CD4-positive, alpha-beta memory T cell (primary cell): ENCODE measurements at regions of chr3 and their contacts with region 1.

Region 1: DNA sequence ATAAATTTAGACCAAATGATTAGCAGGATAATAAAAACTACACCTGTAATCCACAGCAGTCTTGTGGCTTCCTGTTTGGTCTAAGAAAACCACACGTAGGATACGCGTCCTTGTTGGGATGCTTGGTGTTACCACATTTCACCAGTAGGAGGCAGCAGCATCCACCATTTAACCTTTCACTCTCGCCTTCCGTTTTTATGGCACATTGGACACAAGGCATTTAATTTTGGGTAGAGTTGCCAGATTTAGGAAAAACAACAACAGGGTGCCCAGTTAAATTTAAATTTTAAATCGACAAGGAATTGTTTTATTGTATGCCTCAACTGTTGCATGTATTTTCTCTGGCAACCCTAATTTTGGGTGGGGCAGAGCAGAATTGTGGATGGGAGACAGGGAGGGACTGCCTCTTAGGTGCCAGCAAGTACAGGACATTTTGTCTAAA is 6.3 kb downstream of the LRRC31 start:
- DNase-seq: peak; percentile 54 to 71 (median 66)
- H3K4me3 ChIP-seq: no peak overlapping the region
- H3K4me3 Mint-ChIP-seq: no peak overlapping the region
- H3K27ac ChIP-seq: no peak overlapping the region
- H3K27ac Mint-ChIP-seq: peak overlapping the region in 2 of 7 donors; percentile 23 to 38
- H3K4me1 ChIP-seq: peaks cover 7% of the 10 kb centered on the region
- H3K4me1 Mint-ChIP-seq: peaks cover 4 to 15% (median 4%) of the 10 kb centered on the region in 4 donors
- H3K27me3 ChIP-seq: no peaks in the 10 kb centered on the region
- H3K27me3 Mint-ChIP-seq: peaks cover 3 to 9% of the 10 kb centered on the region in 2 donors

Region 2: DNA sequence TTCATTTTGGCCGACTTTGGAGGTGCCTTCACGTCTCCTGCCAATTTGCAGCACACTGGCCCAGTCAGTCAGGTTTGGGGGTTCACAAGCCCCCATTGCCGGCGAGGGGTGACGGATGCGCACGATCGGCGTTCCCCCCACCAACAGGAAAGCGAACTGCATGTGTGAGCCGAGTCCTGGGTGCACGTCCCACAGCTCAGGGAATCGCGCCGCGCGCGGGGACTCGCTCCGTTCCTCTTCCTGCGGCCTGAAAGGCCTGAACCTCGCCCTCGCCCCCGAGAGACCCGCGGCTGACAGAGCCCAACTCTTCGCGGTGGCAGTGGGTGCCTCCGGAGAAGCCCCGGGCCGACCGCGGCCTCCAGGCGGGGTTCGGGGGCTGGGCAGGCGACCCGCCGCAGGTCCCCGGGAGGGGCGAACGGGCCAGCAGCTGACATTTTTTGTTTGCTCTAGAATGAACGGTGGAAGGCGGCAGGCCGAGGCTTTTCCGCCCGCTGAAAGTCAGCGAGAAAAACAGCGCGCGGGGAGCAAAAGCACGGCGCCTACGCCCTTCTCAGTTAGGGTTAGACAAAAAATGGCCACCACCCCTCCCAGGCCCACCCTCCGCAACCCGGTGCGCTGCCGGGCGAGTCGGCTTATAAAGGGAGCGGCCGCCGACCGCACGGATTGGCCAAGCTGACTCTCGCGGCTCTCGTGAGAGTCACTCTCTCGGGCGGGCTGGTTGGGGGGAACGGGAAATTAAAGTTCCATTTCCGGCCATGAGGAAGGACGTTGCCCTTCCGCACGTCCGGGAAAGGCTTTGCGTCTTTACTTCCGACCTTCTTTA is 98.8 kb before region 1 on chr3 and contains the start of gene TERC:
- CTCF ChIA-PET with region 1: interaction called, 29 read pairs
- POLR2A ChIA-PET with region 1: no interaction called
- intact Hi-C with region 1: loop called (anchors 1 kb)
- DNase-seq: peak; percentile 93 to 96 (median 95)
- H3K4me3 ChIP-seq: peak within 1 kb of the TSS; percentile 36 to 70
- H3K4me3 Mint-ChIP-seq: peak within 1 kb of the TSS; percentile 94 to 98 (median 98)
- H3K27ac ChIP-seq: peak within 1 kb of the TSS; percentile 87
- H3K27ac Mint-ChIP-seq: peak within 1 kb of the TSS; percentile 95 to 99 (median 98)
- H3K4me1 ChIP-seq: peaks cover 23% of the 10 kb centered on the region
- H3K4me1 Mint-ChIP-seq: peaks cover 15 to 43% (median 23%) of the 10 kb centered on the region in 4 donors
- H3K27me3 ChIP-seq: no peaks in the 10 kb centered on the region
- H3K27me3 Mint-ChIP-seq: no peaks in the 10 kb centered on the region
- total RNA-seq, gene TERC: 15.6 to 15.7 TPM

Region 3: DNA sequence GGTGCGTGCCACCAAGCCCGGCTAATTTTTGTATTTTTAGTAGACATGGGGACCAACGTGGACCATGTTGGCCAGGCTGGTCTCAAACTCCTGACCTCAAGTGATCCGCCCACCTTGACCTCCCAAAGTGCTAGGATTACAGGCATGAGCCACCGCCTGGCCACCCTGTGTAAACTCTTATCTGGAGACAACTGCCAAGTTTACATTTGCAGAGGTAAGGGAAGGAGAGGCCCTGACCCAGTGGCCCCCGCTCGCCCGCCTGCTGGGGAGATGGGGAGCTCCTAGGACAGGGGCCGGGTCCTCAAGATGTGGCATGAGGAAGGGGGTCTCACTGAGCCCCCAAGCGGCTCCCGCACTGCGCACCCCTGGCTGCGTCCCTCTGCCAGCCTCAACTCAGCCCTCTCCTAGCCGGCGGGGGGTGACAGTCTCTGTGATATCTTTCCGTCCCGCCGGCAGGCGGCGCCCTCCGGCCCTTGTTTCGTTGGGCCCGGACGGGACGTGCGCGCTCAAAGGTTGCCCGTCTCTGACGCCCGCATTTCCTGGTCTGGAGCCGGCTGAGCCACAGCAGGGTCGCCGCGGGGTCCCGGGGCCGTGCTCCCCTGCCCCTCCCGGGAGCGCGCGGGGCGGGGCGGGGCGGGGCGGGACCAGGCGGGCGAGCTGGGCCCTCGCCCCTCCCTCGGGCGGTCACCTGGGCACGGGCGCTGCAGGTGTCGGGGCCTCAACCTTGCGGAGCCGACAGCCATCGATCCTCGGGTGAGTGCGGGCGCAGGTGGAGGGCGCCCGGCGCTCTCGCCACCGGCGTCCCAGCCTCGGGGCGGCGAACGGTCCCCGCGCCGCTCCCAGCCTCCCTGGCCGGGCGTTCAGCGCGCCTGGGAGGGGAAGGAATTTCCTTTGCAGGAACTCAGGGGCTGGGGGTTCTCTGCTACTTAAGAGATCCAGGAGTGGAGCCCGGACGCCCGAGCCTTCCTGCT is 174.3 kb after region 1 on chr3 and contains the start of gene GPR160:
- CTCF ChIA-PET with region 1: interaction called, 9 read pairs
- POLR2A ChIA-PET with region 1: no interaction called
- intact Hi-C with region 1: loop called (anchors 1 kb)
- DNase-seq: peak; percentile 75 to 82 (median 79)
- H3K4me3 ChIP-seq: peak within 1 kb of the TSS; percentile 39 to 77
- H3K4me3 Mint-ChIP-seq: peak within 1 kb of the TSS; percentile 84 to 92 (median 88)
- H3K27ac ChIP-seq: peak within 1 kb of the TSS; percentile 41
- H3K27ac Mint-ChIP-seq: peak within 1 kb of the TSS; percentile 25 to 90 (median 79)
- H3K4me1 ChIP-seq: peaks cover 21% of the 10 kb centered on the region
- H3K4me1 Mint-ChIP-seq: peaks cover 16 to 38% (median 29%) of the 10 kb centered on the region in 4 donors
- H3K27me3 ChIP-seq: no peaks in the 10 kb centered on the region
- H3K27me3 Mint-ChIP-seq: no peaks in the 10 kb centered on the region
- total RNA-seq, gene GPR160: 13.1 to 14.9 TPM

Region 4: GRCh38 chr3:170089862-170090600 is 226.6 kb after region 1 on chr3:
- CTCF ChIA-PET with region 1: no interaction called
- POLR2A ChIA-PET with region 1: no interaction called
- intact Hi-C with region 1: loop called (anchors 10 kb)
- DNase-seq: no peak
- H3K4me3 ChIP-seq: no peak overlapping the region
- H3K4me3 Mint-ChIP-seq: no peak overlapping the region
- H3K27ac ChIP-seq: no peak overlapping the region
- H3K27ac Mint-ChIP-seq: no peak overlapping the region
- H3K4me1 ChIP-seq: no peaks in the 10 kb centered on the region
- H3K4me1 Mint-ChIP-seq: peaks cover 2 to 10% (median 8%) of the 10 kb centered on the region in 4 donors
- H3K27me3 ChIP-seq: no peaks in the 10 kb centered on the region
- H3K27me3 Mint-ChIP-seq: no peaks in the 10 kb centered on the region

Region 5: DNA sequence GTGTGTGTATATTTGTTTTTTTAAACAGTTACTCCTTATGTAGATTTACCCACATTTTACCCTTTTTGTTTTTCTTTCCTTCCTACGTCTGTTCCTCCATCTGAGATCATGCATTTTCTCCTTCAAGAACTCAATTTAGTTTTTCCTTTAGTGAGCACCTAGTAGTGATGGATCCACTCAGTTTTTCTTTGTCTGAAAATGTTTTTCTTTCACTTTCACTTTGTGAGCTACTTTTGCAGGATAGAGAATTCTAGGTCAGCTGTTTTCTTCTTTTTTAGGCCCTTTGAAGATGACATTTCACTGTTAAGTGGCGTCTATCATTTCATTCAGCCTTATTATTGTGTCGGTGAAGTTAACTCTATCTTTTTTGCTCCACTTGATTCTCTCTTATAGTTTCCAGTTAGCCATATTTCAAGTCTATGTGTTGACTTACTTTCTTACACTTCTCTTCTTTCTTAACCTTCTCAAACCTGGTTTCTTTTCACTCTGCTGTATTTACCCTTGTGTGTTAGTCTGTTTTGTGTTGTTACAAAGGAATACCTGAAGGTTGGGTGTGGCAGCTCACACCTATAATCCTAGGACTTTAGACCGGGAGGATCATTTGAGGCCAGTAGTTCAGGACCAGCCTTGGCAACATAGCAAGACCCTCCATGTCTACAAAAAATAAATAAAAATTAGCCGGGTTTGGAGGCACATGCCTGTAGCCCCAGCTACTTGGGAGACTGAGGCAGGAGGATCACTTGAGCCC is 414.5 kb after region 1 on chr3:
- CTCF ChIA-PET with region 1: no interaction called
- POLR2A ChIA-PET with region 1: no interaction called
- intact Hi-C with region 1: loop called (anchors 10 kb)
- DNase-seq: peak in 4 of 5 donors; percentile 22 to 41 (median 24)
- H3K4me3 ChIP-seq: peak overlapping the region; percentile 13 to 61
- H3K4me3 Mint-ChIP-seq: peak overlapping the region; percentile 75 to 92 (median 89)
- H3K27ac ChIP-seq: peak overlapping the region; percentile 3
- H3K27ac Mint-ChIP-seq: peak overlapping the region; percentile 61 to 96 (median 92)
- H3K4me1 ChIP-seq: peaks cover 22% of the 10 kb centered on the region
- H3K4me1 Mint-ChIP-seq: peaks cover 17 to 28% (median 22%) of the 10 kb centered on the region in 4 donors
- H3K27me3 ChIP-seq: no peaks in the 10 kb centered on the region
- H3K27me3 Mint-ChIP-seq: no peaks in the 10 kb centered on the region

Region 6: DNA sequence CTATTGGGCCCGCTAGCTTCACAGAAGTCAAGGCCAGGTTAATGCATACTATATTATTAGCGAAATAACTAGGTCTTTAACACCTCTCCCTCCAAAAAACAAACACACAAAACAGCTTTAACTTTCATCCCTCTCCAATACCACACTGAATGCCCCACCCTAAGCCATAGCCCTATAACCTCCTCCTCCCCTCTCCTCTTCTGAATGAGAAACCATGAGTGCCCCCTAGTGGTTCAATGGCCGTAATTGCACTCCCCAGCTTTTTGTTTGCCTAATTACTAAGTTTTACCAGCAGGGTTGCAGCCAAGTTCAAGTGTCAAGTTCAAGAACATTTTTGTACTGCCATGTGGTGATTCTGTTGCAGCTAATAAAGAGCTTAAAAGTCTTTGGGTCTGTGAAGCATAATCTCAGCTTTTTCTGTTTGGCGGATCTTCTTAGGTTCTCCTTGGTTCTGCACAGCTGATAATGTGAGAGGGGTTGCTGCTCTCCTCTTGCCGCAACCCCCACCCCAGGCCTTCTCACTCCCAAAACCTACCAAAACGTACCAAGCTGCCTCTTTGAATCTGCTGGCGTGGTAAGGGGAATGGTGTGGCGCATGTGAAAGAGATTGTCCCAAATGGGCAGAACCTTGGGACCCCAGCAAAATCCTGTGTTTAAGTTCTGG is 948.6 kb after region 1 on chr3:
- CTCF ChIA-PET with region 1: interaction called, 26 read pairs
- POLR2A ChIA-PET with region 1: no interaction called
- intact Hi-C with region 1: loop called (anchors 1 kb)
- DNase-seq: peak; percentile 64 to 73 (median 67)
- H3K4me3 ChIP-seq: no peak overlapping the region
- H3K4me3 Mint-ChIP-seq: no peak overlapping the region
- H3K27ac ChIP-seq: no peak overlapping the region
- H3K27ac Mint-ChIP-seq: no peak overlapping the region
- H3K4me1 ChIP-seq: no peaks in the 10 kb centered on the region
- H3K4me1 Mint-ChIP-seq: peaks cover 0 to 5% (median under 1%) of the 10 kb centered on the region in 4 donors
- H3K27me3 ChIP-seq: no peaks in the 10 kb centered on the region
- H3K27me3 Mint-ChIP-seq: peaks cover 0 to 2% of the 10 kb centered on the region in 2 donors